AG04450 (cell line): ENCODE measurements at regions of chr7 and their contacts with region 1.

Region 1: DNA sequence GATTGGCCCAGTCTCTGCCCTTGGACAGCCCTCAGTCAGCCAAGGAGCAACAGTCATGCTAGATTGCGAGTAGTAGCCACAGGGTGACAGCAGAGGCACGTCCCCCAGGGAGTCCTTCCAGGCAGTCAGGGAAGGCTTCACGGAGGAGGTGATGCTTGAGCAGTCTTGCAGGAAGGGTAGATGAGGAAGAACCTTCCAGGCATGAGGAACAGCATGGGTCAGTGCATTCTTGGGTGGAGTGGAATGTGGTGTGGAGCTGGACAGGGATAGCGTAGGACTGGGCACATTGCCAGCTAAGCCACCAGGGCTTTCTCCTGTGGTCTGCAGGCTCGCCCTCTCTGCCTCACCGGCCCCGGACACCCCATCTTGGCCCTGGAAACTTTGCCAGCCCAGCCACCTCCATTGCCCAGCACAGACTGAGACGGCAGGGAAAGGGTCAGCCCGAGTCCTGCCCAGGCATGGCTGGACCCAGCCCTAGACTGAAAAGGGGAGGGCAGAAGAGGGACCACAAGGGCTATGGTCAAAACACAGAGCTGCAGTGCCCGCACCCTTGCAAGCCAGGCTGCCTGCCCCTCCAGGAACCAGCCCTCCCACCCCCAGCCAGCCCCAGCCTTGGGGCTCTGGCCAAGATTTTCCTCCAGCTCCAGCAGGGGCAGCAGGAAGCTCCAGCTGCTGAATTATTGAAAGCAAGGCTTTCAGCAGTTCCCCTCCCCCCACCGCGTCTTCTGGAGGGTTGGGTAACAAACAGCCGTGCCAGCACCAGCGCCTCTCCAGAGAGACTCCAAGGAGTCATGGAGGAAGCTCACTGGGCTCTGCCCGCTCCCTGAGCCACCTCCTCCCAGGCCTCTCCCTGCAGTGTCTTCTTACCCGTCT is 18.7 kb downstream of the SRRM3 start:
- DNase-seq: no peak
- H3K4me3 ChIP-seq: no peak overlapping the region
- H3K27ac ChIP-seq: no peak overlapping the region
- H3K27me3 ChIP-seq: peaks cover 23% of the 10 kb centered on the region
- CTCF ChIP-seq: no peak; the same call in 1 of the 2 replicates

Region 2: GRCh38 chr7:76201730-76202665 is 18.4 kb before region 1 on chr7 and contains the start of gene SRRM3:
- CTCF ChIA-PET with region 1: interaction called, 4 read pairs
- POLR2A ChIA-PET with region 1: interaction called, 14 read pairs
- DNase-seq: peak; percentile 37
- H3K4me3 ChIP-seq: no peak within 1 kb of the TSS
- H3K27ac ChIP-seq: no peak within 1 kb of the TSS
- H3K27me3 ChIP-seq: peaks cover 9% of the 10 kb centered on the region
- CTCF ChIP-seq: peak; percentile 56
- polyA plus RNA-seq, gene SRRM3: 1.5 and 2.0 TPM in 2 replicates

Region 3: DNA sequence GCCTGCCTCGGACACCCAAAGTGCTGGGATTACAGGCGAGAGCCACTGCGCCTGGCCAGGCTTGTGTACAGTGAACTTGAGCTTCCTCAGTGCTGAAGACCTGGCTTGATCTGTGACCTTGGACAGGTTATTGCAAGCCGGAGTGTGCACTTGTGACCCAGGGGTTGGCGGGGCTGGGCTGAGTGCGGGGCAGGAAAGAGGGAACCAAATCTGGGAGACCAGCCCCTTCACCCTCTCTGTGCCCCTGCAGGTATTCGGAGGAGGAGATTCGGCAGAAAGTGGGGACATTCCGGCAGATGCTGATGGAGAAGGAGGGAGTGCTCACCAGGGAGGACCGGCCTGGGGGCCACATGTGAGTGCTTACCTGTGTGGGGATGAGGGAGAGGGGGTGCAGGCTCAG is 27.5 kb after region 1 on chr7:
- CTCF ChIA-PET with region 1: interaction called, 14 read pairs
- POLR2A ChIA-PET with region 1: no interaction called
- DNase-seq: no peak
- H3K4me3 ChIP-seq: no peak overlapping the region
- H3K27ac ChIP-seq: no peak overlapping the region
- H3K27me3 ChIP-seq: peaks cover 13% of the 10 kb centered on the region
- CTCF ChIP-seq: no peak

Region 4: DNA sequence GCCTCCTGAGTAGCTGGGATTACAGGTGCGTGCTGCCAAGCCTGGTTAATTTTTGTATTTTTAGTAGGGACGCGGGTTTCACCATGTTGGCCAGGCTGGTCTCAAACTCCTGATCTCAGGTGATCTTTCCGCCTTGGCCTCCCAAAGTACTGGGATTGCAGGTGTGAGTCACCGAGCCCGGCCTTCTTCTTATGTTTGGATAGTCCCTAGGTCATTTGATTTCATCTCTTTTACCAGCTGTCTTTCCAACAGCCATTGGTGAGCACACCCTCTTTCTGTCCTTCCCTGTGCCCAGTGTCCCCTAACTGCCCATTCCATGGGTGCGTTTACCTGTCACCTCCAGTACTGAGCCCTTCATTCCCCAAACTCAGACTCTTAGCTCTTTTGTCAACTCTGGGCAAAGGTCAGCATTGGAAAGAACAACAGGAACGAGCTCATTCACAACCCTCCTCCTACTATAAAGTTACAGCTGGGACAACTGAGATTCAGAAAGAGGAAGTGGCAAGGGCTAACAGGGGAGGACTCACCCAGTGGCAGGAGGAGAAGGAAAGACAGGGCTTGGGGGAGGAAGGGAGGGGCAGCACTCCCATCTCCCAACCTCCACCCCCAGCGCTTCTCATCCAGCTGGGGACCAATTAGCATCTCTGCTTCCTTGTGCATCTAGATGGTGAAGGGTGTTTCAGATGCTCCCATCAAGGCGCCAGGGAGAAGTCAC is 183.5 kb after region 1 on chr7:
- CTCF ChIA-PET with region 1: no interaction called
- POLR2A ChIA-PET with region 1: no interaction called
- DNase-seq: no peak
- H3K4me3 ChIP-seq: no peak overlapping the region
- H3K27ac ChIP-seq: no peak overlapping the region
- H3K27me3 ChIP-seq: peaks cover 9% of the 10 kb centered on the region
- CTCF ChIP-seq: no peak